ENCODE measurements at regions of chr1 and their contacts with region 1.

Region 1: DNA sequence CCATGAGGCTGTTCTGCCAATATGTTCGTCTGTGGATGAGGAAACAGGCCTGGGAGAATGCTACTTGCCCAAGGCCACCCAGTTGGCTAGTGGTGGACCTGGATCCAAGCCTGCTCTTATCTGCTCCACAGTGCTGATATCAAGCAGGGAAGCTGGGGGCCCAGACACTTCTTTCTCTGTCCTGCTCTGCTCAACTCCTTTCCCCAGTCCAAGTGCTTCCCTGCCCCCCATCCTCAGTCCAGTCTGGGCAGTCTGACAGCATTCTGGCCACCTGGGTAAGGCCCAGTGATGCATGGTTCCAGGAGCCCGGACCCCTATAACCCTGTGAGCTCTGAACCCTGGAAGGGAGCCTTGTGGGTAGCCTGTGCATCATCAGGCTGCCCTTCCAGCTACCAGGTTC is 4.2 kb upstream of the PAQR7 start:
- DNase-seq: peak in 2 of 4 experiments; percentile 52 to 66
- ATAC-seq: peak; percentile 25; the same call in 2 of the 3 replicates
- H3K4me3 ChIP-seq: no peak overlapping the region
- H3K27ac ChIP-seq: no peak overlapping the region
- H3K4me1 ChIP-seq: peaks cover 24 to 40% of the 10 kb centered on the region in 2 experiments
- H3K27me3 ChIP-seq: no peaks in the 10 kb centered on the region
- CTCF ChIP-seq: no peak
- EP300 ChIP-seq: no peak
- POLR2A ChIP-seq: no peak
- RAD21 ChIP-seq: no peak

Region 2: GRCh38 chr1:25890239-25891034 is 10.8 kb after region 1 on chr1:
- CTCF ChIA-PET with region 1: no interaction called
- POLR2A ChIA-PET with region 1: interaction called, 76 read pairs
- in situ Hi-C with region 1: no loop called
- intact Hi-C with region 1: no loop called
- DNase-seq: peak in 1 of 4 experiments; percentile 13
- ATAC-seq: peak; percentile 6; the same call in 2 of the 3 replicates
- H3K4me3 ChIP-seq: no peak overlapping the region
- H3K27ac ChIP-seq: no peak overlapping the region
- H3K4me1 ChIP-seq: peaks cover 25 to 30% of the 10 kb centered on the region in 2 experiments
- H3K27me3 ChIP-seq: no peaks in the 10 kb centered on the region
- CTCF ChIP-seq: no peak
- EP300 ChIP-seq: peak; percentile 10; the same call in 1 of the 2 replicates
- POLR2A ChIP-seq: no peak
- RAD21 ChIP-seq: no peak

Measured in K562 (cell line).